ENCODE measurements at regions of chr20 and their contacts with region 1.

Region 1: DNA sequence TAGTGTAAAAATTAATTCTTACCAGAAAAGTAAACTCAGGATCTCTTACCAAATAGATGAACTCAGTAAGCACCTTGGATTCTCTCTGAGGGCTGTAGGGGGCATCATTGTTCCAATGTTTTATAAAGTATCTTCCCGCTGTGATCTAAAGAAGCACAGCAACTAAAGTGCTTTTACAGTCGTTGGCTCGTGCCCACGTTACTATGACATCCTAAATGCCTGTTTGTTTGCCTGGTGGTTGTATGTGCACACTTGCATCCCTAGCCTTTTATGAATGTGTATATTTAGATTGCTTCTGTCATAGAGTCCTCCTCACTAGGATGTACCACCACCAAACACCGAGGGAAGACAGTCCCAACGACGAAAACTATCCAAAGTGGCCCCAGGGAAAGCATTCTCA is 34.5 kb downstream of the SLX4IP start:
- DNase-seq: no peak

Region 2: DNA sequence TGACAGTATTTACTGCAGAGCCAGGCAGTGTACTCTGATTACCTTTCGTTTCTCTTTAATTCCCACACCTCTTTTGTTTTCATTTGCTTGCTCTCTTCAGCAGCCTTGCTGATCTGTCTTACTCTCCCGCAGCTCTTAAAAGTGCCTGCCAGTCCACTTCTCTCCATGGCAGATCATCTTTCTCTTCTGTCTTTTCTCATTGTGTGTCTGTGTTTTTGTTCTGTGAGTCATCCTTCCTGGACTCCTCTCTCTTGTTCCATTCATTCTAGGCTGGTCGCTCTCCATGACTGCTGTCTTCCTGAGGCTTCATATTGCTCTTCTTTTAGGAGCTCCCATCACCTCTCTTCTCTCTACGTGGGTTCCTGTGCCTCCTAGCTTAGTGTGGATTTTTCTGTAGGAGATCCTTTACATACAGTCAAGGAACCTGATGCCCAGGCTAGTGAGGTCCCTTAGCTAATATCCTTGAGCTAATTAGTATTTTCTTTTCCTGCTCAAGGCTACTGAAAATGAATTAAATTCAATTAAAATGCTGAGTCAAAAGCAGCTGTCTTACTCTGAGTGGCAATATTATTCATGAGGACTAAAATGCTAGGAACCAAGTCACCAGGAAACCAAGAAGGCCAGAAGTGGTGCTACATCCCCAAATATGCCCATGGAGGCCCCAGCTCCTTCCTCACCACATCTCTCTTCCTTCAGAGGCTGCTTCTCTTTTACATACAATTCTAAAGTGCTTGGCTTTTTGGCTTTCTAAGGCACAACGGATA is 51.7 kb after region 1 on chr20:
- intact Hi-C with region 1: no loop called
- DNase-seq: no peak

Region 3: GRCh38 chr20:10536531-10536930 is 66.9 kb after region 1 on chr20:
- intact Hi-C with region 1: loop called in 1 of 2 experiments (anchors 10 kb)
- DNase-seq: no peak